ENCODE measurements at regions of chr20 and their contacts with region 1.

Region 1: DNA sequence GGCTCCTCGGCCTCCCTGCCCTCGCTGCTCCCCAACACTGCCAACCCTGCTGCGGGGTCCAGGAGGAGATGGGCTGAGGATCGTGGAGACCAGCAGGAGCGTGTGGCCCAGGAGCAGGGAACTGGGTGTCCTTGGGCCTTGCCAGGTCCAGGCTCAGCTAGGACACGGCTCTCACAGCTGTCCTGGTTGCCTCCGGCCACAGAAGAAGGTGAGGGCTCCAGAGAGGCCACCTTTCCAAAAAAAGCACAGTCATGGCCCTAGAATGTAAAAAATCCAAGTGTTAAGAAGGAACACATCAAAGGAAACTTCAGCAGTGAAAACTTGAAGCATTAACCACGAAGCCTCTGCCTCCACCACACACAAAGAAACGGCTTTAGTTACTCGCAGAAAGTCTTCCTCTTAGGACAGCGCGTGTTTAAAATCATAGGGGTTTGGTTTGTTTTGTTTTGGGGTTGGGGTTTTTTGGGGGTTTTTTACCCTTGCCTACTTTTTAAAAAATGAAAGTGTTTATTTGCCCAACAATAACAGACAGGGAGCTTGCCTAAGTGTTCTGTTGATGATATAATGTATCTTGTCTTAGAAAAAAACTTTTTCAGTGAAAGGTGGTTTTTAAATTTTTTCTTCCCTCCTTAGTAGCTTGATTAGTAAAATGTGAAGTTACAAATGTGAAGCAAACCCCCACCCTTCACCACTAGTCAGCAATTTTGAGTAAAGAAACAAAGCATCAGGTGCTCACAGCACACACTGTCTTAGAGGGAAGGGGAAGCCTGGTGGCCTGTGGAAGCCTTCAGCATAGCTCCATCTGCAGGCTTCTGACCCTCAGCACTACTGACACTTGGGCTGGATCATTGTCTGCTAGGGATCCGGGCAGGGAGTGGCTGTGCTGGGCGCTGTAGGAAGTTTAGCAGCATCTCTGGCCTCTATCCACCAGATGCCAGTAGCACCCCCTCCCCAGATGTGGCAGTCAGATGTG is 60.0 kb downstream of the PTPN1 start:
- DNase-seq: peak; percentile 35 to 75 (median 54)
- ATAC-seq: peak; percentile 99
- H3K4me3 ChIP-seq: no peak overlapping the region
- H3K27ac ChIP-seq: peak overlapping the region; percentile 59; the same call in 2 of the 3 replicates
- H3K4me1 ChIP-seq: peaks cover 4 to 22% of the 10 kb centered on the region in 2 experiments
- H3K27me3 ChIP-seq: no peaks in the 10 kb centered on the region
- CTCF ChIP-seq: peak; percentile 79 to 88 (median 83)
- EP300 ChIP-seq: peak; percentile 31; the same call in 1 of the 2 replicates
- POLR2A ChIP-seq: no peak
- RAD21 ChIP-seq: peak; percentile 74 to 91

Region 2: DNA sequence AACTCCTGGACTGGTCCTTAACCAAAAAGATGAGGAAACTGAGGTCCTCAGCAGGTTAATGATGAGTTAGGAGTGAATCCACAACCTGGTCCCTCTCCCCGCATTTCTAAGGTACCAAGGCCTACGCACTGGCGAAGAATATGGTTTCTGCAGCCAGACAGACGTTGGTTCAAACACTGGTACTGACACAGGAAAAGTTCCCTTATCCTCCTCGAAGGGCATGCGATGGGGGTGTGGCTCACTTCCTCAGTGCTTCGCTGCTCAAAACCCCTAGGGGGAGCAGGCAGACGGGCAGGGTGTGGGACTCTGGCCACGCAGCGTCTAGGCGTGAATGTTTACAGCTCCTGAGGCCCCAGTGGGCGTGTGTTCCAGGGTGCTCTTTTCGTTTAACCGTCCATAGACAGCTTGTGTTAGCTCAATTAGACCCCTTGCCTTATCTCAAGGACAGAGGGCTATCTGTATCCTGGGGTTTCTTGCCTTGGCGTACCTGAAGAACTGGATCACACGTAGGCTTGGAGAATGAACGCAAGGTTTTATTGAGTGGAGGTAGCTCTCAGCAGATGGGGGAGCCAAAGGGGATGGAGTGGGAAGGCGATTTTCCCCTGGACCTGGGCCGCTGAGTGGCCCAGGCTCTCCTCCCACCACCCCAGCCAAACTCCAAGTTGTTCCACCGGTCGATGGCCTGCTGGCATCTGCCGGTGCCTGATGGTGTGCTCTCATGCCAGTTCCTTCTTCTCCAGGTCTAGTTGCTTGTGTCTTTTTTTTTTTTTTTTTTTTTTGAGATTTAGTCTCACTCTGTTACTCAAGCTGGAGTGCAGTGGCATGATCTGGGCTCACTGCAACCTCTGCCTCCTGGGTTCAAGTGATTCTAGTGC is 91.8 kb before region 1 on chr20:
- CTCF ChIA-PET with region 1: no interaction called
- POLR2A ChIA-PET with region 1: no interaction called
- in situ Hi-C with region 1: loop called (anchors 5 kb)
- intact Hi-C with region 1: loop called (anchors 2 kb)
- DNase-seq: peak; percentile 68 to 93 (median 74)
- ATAC-seq: peak; percentile 94
- H3K4me3 ChIP-seq: no peak overlapping the region
- H3K27ac ChIP-seq: peak overlapping the region; percentile 64
- H3K4me1 ChIP-seq: peaks cover 21 to 52% of the 10 kb centered on the region in 2 experiments
- H3K27me3 ChIP-seq: no peaks in the 10 kb centered on the region
- CTCF ChIP-seq: peak; percentile 89 to 92 (median 92)
- EP300 ChIP-seq: 0 out of 2 replicates have a peak, but pooled peaks have one; percentile 31
- POLR2A ChIP-seq: no peak
- RAD21 ChIP-seq: peak; percentile 74 to 89

Region 3: DNA sequence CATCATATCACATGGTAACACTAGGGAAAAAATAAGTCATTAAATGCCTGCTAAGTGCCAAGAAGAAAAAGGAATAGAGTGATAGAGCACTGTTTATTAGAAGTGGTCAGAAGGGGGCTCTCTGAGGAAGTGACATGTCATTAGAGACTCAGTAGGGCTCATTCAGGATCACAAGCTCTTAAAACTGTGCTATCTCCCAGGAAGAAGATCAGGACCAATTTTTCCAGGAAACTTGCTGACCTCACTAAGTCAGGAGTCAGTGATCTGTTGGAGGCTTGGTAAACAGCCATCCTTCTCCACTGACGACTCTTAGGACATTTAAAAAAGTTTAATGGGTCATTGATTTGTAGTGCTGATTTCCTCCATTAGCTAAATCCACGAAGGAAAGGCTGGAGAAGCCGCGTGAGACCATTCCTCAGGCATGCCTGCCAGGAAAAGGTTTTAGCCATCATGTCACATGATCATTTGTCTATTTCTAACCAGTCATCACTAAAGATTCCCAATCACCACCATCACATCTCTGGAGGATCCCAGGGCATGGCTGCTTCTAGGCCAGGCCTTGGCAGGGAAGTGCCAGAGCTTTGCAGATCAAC is 65.8 kb before region 1 on chr20:
- CTCF ChIA-PET with region 1: no interaction called
- POLR2A ChIA-PET with region 1: no interaction called
- in situ Hi-C with region 1: no loop called
- intact Hi-C with region 1: loop called (anchors 1 kb)
- DNase-seq: peak; percentile 45 to 67 (median 50)
- ATAC-seq: peak; percentile 60
- H3K4me3 ChIP-seq: no peak overlapping the region
- H3K27ac ChIP-seq: peak overlapping the region; percentile 23; the same call in 2 of the 3 replicates
- H3K4me1 ChIP-seq: peaks cover 5 to 31% of the 10 kb centered on the region in 2 experiments
- H3K27me3 ChIP-seq: no peaks in the 10 kb centered on the region
- CTCF ChIP-seq: peak; percentile 21 to 56 (median 22); a peak in 3 of 6 replicates
- EP300 ChIP-seq: peak; percentile 51; the same call in 1 of the 2 replicates
- POLR2A ChIP-seq: no peak
- RAD21 ChIP-seq: peak; percentile 50 to 74